HCT116 (cell line): ENCODE measurements at regions of chr3 and their contacts with region 1.

Region 1: DNA sequence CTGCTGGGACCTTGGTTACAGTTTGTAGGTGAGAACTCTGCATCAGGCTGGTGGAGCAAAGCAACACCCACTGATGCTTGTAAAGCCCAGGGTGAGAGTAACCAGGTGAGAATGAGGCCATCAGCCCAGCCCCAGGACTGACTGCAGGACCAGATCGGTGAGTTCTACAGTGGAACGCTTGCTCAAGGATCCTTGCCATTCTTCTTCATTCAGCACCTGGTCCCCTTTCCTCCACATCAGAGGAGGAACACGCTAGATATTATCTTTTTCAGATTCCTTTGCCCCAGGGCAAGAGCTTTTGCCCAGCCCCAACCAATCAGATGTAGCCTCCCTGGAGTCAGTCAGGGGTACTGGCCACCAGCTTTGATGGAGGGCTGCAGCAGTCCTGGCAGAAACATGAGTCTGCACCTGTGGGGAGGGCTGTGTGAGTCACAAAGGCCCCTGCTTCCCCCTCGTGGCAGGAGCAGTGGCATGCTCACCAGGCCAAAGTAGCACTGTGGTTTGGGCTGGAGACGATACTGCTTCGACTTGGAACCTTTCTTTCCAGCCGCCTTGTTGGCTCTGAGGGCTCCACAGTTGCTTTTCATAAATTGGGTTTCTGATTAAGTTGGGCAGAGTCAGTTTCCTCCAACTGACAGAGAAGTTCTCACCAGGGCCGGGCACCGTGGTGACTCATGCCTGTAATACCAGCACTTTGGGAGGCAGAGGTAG is 3.5 kb upstream of the SHISA5 start:
- DNase-seq: peak; percentile 87
- ATAC-seq: peak; percentile 87
- H3K4me3 ChIP-seq: peak overlapping the region in 1 of 2 experiments; percentile 32; a peak in 3 of 4 replicates
- H3K27ac ChIP-seq: peak overlapping the region; percentile 80
- H3K4me1 ChIP-seq: peaks cover 51 to 65% of the 10 kb centered on the region in 2 experiments
- H3K27me3 ChIP-seq: no peaks in the 10 kb centered on the region
- CTCF ChIP-seq: peak in 2 of 3 experiments; percentile 57 to 66; a peak in 4 of 6 replicates
- POLR2A ChIP-seq: no peak
- RAD21 ChIP-seq: no peak

Region 2: DNA sequence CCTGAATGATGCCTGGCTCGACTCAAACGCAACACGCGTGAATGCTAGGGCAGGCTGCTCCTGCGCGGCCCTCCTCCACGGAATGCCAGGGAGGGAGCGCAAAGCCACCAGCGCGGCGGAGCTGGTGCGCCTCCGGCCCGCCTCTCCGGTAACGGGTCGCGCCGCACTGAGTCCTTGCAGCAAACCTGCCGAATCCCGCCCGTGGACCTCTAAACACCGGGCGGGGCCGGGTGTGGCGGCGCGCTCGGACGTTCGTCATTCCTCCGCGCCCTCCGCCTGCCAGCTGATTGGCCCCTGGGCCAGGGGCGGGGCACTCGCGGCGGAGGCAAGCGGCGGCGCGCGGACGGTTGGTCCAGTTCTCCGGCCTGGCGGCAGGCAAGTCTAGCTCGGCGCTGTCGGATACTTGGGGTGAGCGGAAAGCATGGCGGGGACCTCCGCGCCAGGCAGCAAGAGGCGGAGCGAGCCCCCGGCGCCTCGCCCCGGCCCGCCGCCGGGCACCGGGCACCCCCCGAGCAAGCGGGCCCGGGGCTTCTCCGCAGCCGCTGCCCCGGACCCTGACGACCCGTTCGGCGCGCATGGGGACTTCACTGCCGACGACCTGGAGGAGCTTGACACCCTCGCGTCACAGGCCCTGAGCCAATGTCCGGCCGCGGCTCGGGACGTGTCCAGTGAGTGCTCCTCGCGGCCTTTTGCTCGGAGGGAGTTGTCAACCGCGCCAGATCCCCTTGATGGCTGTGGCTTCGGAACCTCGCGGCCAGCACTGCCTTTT is 60.9 kb before region 1 on chr3 and contains the start of gene ATRIP:
- CTCF ChIA-PET with region 1: no interaction called
- POLR2A ChIA-PET with region 1: no interaction called
- RAD21 ChIA-PET with region 1: no interaction called
- intact Hi-C with region 1: no loop called
- DNase-seq: peak; percentile 62
- ATAC-seq: peak; percentile 88
- H3K4me3 ChIP-seq: peak within 1 kb of the TSS; percentile 96 to 97
- H3K27ac ChIP-seq: peak within 1 kb of the TSS; percentile 82
- H3K4me1 ChIP-seq: peaks cover 14 to 27% of the 10 kb centered on the region in 2 experiments
- H3K27me3 ChIP-seq: no peaks in the 10 kb centered on the region
- CTCF ChIP-seq: no peak
- POLR2A ChIP-seq: peak; percentile 95
- RAD21 ChIP-seq: no peak
- total RNA-seq, gene ATRIP: 15.6 TPM

Region 3: DNA sequence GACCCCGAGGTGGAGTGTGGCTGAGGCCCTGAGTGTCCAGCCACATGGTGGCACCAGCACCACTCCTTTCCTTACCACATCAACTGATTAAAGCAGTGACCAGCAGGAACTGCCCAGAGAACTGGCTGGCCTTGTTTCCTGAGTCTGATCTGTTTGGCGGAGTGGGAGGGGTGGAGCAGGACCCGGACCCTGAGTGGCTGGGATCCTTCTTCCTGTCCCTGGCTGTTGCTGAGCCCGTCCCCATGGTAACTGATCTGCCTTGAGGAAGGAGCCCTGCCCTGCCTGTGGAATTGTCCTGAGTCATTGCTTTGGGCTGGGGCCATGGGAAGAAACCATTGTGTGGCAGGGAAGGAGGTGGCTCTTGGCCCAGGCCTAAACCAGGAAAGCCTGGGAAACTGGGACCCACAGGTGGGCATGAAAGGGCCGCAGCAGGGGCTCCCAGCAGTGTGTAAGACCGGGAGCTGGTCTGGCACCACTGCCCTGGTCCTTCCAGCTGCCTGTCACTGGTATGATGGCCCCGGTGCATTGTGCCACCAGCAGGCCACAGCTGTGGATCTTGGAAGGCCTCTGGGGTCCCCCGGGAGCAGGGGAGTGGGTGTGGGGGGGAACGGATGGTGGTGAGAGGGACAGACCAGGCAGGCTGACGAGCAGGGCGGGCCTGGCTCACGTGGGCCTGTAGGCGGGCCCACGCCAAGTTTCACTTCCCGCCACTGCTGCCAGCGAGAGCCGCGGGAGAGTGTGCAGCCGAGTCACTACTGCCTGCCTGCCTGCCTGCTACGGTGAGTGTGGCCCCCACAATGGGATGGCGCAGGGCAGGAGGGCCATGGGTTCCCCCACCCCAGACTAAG is 41.8 kb before region 1 on chr3:
- CTCF ChIA-PET with region 1: no interaction called
- POLR2A ChIA-PET with region 1: no interaction called
- RAD21 ChIA-PET with region 1: no interaction called
- intact Hi-C with region 1: loop called (anchors 1 kb)
- DNase-seq: peak; percentile 96
- ATAC-seq: peak; percentile 85
- H3K4me3 ChIP-seq: peak overlapping the region; percentile 56 to 60
- H3K27ac ChIP-seq: peak overlapping the region; percentile 98
- H3K4me1 ChIP-seq: peaks cover 16 to 33% of the 10 kb centered on the region in 2 experiments
- H3K27me3 ChIP-seq: no peaks in the 10 kb centered on the region
- CTCF ChIP-seq: peak in 2 of 3 experiments; percentile 62 to 64; a peak in 4 of 6 replicates
- POLR2A ChIP-seq: no peak
- RAD21 ChIP-seq: no peak

Region 4: DNA sequence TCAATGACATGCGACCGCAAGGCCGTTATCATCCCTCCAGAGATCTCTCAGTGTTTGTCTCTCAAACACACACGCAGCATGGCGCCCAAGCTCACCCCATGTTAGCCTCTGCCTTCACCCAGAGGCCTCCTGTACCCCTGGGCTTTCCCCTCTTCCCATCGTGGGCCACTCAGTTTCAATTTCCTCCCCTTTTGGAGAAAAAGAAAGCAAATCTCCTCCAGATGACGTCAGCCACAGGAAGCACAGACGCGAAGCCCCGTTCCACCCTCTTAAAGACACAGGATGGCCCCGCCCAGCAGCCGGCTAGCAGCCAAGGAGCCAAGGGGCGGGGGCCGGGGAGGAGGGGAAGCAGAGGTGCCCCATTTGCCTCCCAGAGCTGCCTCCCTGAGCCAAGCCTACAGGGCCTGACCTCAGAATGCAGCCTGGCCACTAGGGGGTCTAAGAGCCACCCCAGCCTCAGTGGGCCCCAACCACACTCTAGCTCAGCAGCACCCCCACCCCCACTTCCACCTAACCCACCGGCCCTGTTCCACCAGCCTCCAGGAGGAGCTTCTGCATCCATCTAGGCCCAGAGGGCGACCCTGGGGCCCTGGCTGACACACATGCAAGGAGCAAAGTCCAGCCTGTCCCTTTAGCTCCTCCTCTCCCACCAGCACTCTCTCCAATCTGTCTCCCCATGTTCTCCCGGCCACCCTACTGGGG is 34.4 kb before region 1 on chr3:
- CTCF ChIA-PET with region 1: interaction called, 6 read pairs
- POLR2A ChIA-PET with region 1: interaction called, 3 read pairs
- RAD21 ChIA-PET with region 1: interaction called in 1 of 2 experiments, 3 read pairs
- intact Hi-C with region 1: loop called (anchors 2 kb)
- DNase-seq: peak; percentile 77
- ATAC-seq: peak; percentile 89
- H3K4me3 ChIP-seq: peak overlapping the region; percentile 65 to 91
- H3K27ac ChIP-seq: peak overlapping the region; percentile 73
- H3K4me1 ChIP-seq: peaks cover 20 to 32% of the 10 kb centered on the region in 2 experiments; a peak in 3 of 4 replicates
- H3K27me3 ChIP-seq: no peaks in the 10 kb centered on the region
- CTCF ChIP-seq: peak in 2 of 3 experiments; percentile 32 to 54; a peak in 2 of 6 replicates
- POLR2A ChIP-seq: peak; percentile 71
- RAD21 ChIP-seq: no peak